ENCODE measurements at regions of chr3 and their contacts with region 1.

Region 1: DNA sequence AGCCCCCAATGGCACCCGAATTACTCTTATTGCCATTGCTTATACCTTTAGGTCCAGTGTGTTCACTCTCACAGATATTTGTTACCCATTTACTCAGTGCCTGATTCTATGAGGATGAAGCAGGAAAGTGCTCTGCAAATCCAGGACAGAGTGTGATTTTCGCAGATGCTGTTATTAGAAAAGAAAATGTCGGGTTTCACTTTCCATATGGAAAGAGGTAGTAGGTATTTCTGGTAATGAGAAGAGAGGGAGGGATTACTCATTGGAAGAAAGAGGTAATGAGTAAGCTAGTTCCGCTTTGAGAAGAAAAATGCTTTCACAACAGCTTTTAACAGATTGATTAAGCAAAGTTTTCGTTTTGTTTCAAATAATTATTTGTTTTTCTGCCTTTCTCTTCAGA is 336.3 kb upstream of the CFAP20DC start:
- DNase-seq: no peak
- H3K4me3 Mint-ChIP-seq: peak overlapping the region; percentile 24
- H3K27ac Mint-ChIP-seq: peak overlapping the region; percentile 76
- H3K4me1 Mint-ChIP-seq: peaks cover 72% of the 10 kb centered on the region
- H3K27me3 Mint-ChIP-seq: peaks cover 2% of the 10 kb centered on the region

Region 2: DNA sequence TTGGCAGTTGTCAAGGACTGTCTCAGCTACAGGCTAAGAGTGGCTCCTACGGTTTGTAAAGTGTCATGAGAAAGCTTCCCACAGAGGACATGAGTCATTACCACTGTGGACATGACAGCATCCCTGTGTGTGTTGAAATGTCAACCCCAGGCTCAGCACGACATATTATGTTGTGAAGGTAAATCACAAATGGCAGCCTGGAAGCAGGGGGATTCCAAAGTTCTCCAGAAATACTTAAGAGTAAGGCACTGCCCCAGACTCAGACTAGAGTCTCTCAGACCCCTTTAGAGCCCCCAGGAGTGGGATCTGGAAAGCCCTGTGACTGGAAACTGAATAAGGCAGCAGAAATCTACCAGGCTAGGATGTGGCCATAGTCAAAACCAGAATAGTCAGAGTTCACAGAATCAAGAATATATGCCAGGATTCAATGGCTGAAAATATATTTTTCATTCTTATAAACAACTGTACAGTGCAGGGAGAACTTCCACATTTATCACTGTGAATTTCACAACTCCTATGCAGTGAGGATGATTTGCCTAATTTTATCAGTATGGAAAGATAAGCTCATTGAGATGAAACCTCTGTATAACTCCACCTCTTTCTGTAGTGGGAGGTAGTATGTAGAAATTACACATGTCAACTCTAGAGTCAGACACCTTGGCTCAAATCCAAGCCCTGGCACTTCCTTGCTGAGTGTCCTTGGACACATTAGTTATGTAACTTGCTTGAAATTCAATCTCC is 99.2 kb before region 1 on chr3:
- CTCF ChIA-PET with region 1: no interaction called
- POLR2A ChIA-PET with region 1: no interaction called
- intact Hi-C with region 1: loop called (anchors 2 kb)
- DNase-seq: peak; percentile 52
- H3K4me3 Mint-ChIP-seq: no peak overlapping the region
- H3K27ac Mint-ChIP-seq: peak overlapping the region; percentile 18
- H3K4me1 Mint-ChIP-seq: peaks cover 35% of the 10 kb centered on the region
- H3K27me3 Mint-ChIP-seq: no peaks in the 10 kb centered on the region

Region 3: DNA sequence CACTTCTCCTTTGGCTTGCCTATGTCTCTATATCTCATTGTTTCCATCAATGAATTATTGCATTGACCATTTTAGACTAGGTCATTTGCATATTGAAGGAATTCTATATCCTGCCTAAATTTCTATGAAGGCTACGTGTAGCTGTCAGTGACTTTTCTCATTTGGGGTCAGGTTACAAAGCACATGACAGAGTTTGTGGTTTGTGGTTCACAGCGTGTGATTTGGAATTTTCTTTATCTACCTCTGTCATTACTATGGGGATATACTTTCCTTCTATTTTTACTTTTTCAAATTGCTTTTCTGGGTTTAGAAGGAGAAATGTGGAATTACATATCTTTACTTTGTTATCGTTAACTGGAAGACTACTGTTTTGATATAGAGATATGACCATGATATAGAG is 19.0 kb before region 1 on chr3:
- CTCF ChIA-PET with region 1: no interaction called
- POLR2A ChIA-PET with region 1: no interaction called
- intact Hi-C with region 1: no loop called
- DNase-seq: no peak
- H3K4me3 Mint-ChIP-seq: no peak overlapping the region
- H3K27ac Mint-ChIP-seq: no peak overlapping the region
- H3K4me1 Mint-ChIP-seq: peaks cover 5% of the 10 kb centered on the region
- H3K27me3 Mint-ChIP-seq: peaks cover 2% of the 10 kb centered on the region

Region 4: GRCh38 chr3:59444294-59444671 is 58.1 kb after region 1 on chr3:
- CTCF ChIA-PET with region 1: interaction called, 3 read pairs
- POLR2A ChIA-PET with region 1: no interaction called
- intact Hi-C with region 1: loop called (anchors 1 kb)
- DNase-seq: peak; percentile 48
- H3K4me3 Mint-ChIP-seq: peak overlapping the region; percentile 38
- H3K27ac Mint-ChIP-seq: peak overlapping the region; percentile 49
- H3K4me1 Mint-ChIP-seq: peaks cover 50% of the 10 kb centered on the region
- H3K27me3 Mint-ChIP-seq: peaks cover 1% of the 10 kb centered on the region

Region 5: DNA sequence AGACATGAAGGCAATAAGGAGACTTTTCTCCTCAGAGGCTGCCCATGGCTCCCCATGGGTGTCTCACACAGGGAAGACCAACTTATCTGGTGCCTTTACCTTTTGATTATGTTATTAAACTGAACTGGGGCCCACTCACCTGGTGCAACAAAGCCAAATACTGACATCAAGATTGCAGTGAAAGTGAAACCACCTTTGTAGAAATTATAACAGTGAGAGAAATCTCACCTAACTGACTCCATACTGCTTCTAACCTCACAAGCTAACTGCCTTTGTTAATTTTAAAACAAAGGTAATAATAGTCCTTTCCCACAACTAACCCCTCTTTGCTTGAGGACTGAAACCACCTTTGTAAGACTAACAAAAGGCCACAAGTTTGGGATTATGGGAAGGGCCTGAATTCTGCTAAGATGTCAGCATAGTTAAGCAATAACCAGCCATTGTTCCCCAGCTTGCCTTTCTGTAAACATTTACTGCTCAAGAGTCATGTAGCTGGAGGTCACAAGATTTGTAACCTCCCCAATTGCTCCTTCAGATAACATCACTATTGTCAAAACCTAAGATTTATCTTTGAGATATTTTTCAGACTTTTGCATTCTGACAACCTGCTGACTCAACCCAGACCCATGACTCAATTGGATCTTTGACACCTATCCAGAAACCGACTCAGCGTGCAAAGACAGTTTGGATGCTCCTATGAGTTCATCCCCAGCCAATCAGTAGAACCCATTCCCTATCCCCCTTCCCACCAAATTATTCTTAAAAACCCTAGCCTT is 84.0 kb after region 1 on chr3:
- CTCF ChIA-PET with region 1: no interaction called
- POLR2A ChIA-PET with region 1: no interaction called
- intact Hi-C with region 1: loop called (anchors 1 kb)
- DNase-seq: peak; percentile 70
- H3K4me3 Mint-ChIP-seq: no peak overlapping the region
- H3K27ac Mint-ChIP-seq: peak overlapping the region; percentile 71
- H3K4me1 Mint-ChIP-seq: peaks cover 22% of the 10 kb centered on the region
- H3K27me3 Mint-ChIP-seq: no peaks in the 10 kb centered on the region

Region 6: DNA sequence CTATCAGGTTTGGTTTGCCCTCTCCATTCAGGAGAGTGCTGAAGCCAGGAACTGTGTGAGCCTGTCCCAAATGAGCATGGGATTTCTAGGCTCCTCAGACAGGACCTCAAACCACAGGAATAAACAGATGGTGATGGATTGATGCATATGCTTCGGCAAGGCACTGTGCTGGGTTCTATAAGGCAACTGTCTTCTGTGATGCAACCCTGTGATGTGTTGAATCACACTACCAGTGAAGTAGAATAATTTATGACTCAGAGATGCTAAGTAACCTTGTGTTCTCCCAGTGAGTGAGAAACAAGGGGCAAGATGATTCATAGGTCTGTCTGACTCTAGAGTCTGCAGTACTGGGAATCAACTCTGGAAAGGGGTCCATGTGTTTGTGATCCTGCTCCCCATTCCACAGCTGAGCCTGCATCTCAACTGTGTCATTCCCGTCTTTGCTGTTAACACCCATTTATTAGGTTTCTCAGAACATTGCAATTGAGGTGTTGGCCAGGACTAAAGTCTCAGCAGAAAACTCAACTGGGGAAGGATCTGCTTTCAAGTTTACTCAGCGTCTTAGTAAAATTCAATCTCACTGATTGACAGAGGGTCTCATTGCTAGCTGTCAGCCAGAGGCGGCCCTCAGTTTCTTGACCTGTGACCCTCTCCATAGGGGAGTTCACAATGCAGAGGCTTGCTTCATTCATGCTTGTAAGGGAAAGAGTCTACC is 173.7 kb after region 1 on chr3:
- CTCF ChIA-PET with region 1: no interaction called
- POLR2A ChIA-PET with region 1: no interaction called
- intact Hi-C with region 1: loop called (anchors 1 kb)
- DNase-seq: peak; percentile 50
- H3K4me3 Mint-ChIP-seq: no peak overlapping the region
- H3K27ac Mint-ChIP-seq: peak overlapping the region; percentile 80
- H3K4me1 Mint-ChIP-seq: peaks cover 31% of the 10 kb centered on the region
- H3K27me3 Mint-ChIP-seq: peaks cover 5% of the 10 kb centered on the region

Region 7: GRCh38 chr3:59783468-59783988 is 397.4 kb after region 1 on chr3:
- CTCF ChIA-PET with region 1: no interaction called
- POLR2A ChIA-PET with region 1: no interaction called
- intact Hi-C with region 1: loop called (anchors 5 kb)
- DNase-seq: peak; percentile 52
- H3K4me3 Mint-ChIP-seq: no peak overlapping the region
- H3K27ac Mint-ChIP-seq: no peak overlapping the region
- H3K4me1 Mint-ChIP-seq: peaks cover 18% of the 10 kb centered on the region
- H3K27me3 Mint-ChIP-seq: no peaks in the 10 kb centered on the region